GM12878 (cell line): ENCODE measurements at regions of chr1 and their contacts with region 1.

Region 1: DNA sequence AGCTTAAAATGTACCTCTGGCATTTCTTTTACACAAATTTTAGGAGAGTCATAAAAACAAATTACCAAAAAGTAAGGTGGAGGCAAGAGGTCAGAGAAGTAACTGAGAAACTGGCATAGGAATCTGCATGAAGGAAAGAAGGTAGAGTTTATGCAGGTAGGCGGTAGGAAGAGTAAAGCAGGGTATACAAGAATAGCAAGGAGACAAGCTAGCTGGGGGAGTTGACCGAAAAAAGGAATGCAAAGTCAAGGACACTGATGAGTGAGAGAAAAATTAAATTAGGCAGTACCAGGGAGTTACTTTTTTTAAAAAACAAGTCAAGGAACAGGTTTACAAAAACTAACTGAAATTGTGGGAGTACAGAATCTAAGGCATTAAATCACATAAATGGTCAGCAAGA is 56.0 kb downstream of the FOXJ3 start:
- DNase-seq: no peak
- ATAC-seq: no peak
- H3K4me3 ChIP-seq: no peak overlapping the region
- H3K27ac ChIP-seq: no peak overlapping the region
- H3K4me1 ChIP-seq: no peaks in the 10 kb centered on the region
- H3K27me3 ChIP-seq: no peaks in the 10 kb centered on the region
- CTCF ChIP-seq: no peak
- EP300 ChIP-seq: no peak
- POLR2A ChIP-seq: no peak
- RAD21 ChIP-seq: no peak

Region 2: DNA sequence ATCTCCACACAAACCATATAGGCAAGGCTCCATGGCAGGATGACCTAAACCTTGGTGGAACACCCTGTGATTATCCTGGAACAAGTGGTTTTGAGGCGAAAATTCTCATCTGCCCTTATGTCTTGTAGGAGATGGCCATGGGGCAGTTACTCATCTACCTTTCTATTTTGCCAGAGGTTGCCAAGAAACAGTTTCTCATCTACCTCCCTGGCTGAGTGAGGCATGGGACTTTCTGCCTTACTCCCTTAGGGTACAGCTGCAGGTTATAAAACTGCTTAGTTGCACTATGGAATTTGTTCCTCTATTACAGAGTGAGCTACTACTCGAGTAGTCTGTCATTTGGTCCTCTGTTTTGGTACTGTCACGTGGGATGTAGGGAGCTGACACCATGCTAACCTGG is 83.2 kb before region 1 on chr1:
- CTCF ChIA-PET with region 1: no interaction called
- POLR2A ChIA-PET with region 1: no interaction called
- RAD21 ChIA-PET with region 1: no interaction called
- SMC1A ChIA-PET with region 1: no interaction called
- in situ Hi-C with region 1: no loop called
- intact Hi-C with region 1: no loop called
- DNase-seq: no peak
- ATAC-seq: no peak
- H3K4me3 ChIP-seq: no peak overlapping the region
- H3K27ac ChIP-seq: no peak overlapping the region
- H3K4me1 ChIP-seq: no peaks in the 10 kb centered on the region
- H3K27me3 ChIP-seq: no peaks in the 10 kb centered on the region
- CTCF ChIP-seq: no peak
- EP300 ChIP-seq: no peak
- POLR2A ChIP-seq: no peak
- RAD21 ChIP-seq: no peak

Region 3: DNA sequence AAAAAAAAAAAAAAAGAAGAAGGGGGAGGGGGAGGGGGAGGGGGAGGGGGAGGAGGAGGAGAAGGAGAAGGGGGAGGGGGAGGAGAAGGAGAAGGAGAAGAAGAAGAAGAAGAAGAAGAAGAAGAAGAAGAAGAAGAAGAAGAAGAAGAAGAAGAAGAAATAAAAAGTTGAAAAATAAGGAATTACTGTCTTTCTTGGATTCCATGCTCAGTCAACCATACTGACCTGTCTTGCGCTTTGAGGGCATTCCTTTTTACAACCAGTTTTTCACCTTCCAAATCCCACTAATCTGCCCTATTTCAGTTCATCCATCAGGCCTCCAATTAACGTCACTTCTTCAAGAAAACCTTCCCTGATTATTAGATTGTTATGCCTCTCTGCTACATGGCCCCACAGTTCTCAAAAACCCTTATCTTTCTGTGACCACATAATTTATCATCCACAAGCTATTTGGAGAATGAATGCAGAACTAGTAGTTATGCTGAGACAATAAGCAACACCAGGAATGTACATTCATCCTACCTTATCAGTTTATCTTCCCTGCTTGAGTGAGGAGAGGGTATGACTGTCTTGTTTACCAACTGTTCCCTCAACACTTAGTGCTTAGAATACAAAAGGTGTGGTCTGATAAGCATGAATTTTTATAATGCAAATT is 57.0 kb before region 1 on chr1:
- CTCF ChIA-PET with region 1: no interaction called
- POLR2A ChIA-PET with region 1: no interaction called
- RAD21 ChIA-PET with region 1: no interaction called
- SMC1A ChIA-PET with region 1: no interaction called
- in situ Hi-C with region 1: no loop called
- intact Hi-C with region 1: no loop called
- DNase-seq: no peak
- ATAC-seq: no peak
- H3K4me3 ChIP-seq: no peak overlapping the region
- H3K27ac ChIP-seq: no peak overlapping the region
- H3K4me1 ChIP-seq: no peaks in the 10 kb centered on the region
- H3K27me3 ChIP-seq: no peaks in the 10 kb centered on the region
- CTCF ChIP-seq: no peak
- EP300 ChIP-seq: no peak
- POLR2A ChIP-seq: no peak
- RAD21 ChIP-seq: no peak

Region 4: DNA sequence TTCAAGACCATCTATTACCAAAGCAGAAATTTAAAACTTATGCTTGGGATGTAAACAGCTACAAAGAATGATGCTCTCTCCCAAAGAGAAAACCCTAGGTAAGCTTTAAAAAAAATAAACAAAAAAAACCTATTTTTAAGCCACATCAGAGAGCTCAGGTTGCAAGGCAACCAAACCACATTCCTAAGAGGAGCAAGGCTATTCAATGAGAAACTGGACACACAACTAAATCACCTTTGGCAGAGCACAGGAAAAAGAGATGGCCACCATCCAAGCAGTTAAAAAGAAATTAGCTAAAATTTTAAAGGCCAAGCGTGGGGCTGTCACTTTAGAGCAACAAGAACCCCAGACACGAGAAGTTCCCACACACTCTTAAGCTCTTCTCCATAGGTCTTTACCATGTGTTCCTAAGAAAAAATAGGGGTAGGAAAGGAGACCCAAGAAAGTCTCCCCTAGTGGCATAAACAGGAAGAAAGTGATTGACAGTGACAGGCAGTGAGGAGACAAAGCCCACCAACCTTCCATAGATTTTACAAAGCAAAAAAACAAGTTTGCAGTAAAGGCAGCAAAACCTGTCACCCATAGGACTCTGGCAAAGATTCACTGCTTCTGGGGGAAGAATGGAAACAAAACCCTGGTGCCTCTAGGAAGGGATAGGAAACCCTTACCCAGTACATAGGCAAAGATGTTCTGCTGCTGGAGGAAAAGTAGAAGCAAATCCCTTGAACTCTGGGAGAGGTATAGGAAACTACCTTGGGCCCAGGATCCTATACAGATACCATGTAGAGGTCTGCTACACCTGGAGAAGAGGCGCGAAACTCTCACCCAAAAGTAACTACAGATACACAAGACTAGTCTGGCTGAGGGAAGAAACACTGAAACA is 12.6 kb before region 1 on chr1:
- CTCF ChIA-PET with region 1: interaction called, 4 read pairs
- POLR2A ChIA-PET with region 1: interaction called, 5 read pairs
- RAD21 ChIA-PET with region 1: interaction called, 5 read pairs
- SMC1A ChIA-PET with region 1: interaction called, 10 read pairs
- in situ Hi-C with region 1: no loop called
- intact Hi-C with region 1: no loop called
- DNase-seq: no peak
- ATAC-seq: no peak
- H3K4me3 ChIP-seq: no peak overlapping the region
- H3K27ac ChIP-seq: no peak overlapping the region
- H3K4me1 ChIP-seq: peaks cover 7% of the 10 kb centered on the region
- H3K27me3 ChIP-seq: no peaks in the 10 kb centered on the region
- CTCF ChIP-seq: 0 out of 6 replicates have a peak, but pooled peaks of 1 of the 3 experiments have one; percentile 5
- EP300 ChIP-seq: no peak
- POLR2A ChIP-seq: no peak
- RAD21 ChIP-seq: no peak

Region 5: DNA sequence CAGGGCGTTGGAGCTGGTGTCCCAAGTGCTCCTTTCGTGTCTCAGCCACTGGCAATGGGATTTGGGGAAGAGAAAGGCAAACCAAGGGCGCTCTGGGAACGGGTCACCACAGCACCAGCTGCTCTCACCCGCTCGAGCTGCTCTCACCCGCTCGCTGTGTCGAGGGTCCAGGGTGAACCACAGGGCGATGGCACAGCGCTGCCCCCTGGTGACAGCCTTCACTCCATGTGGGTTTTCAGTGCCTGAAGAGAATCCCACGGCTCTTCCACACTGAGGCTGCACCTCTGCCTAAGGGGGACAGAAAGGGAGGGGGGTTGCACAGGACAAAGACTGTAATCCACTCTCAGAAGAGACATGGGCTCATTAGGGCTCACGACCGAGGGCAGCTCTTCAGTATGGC is 468.1 kb after region 1 on chr1:
- CTCF ChIA-PET with region 1: no interaction called
- POLR2A ChIA-PET with region 1: no interaction called
- RAD21 ChIA-PET with region 1: no interaction called
- SMC1A ChIA-PET with region 1: no interaction called
- in situ Hi-C with region 1: no loop called
- intact Hi-C with region 1: no loop called
- DNase-seq: no peak
- ATAC-seq: peak; percentile 74
- H3K4me3 ChIP-seq: no peak overlapping the region
- H3K27ac ChIP-seq: no peak overlapping the region
- H3K4me1 ChIP-seq: no peaks in the 10 kb centered on the region
- H3K27me3 ChIP-seq: no peaks in the 10 kb centered on the region
- CTCF ChIP-seq: peak; percentile 65 to 69 (median 67)
- EP300 ChIP-seq: no peak
- POLR2A ChIP-seq: no peak
- RAD21 ChIP-seq: peak; percentile 66

Region 6: GRCh38 chr1:42777852-42778251 is 498.8 kb after region 1 on chr1:
- CTCF ChIA-PET with region 1: no interaction called
- POLR2A ChIA-PET with region 1: no interaction called
- RAD21 ChIA-PET with region 1: no interaction called
- SMC1A ChIA-PET with region 1: no interaction called
- in situ Hi-C with region 1: no loop called
- intact Hi-C with region 1: no loop called
- DNase-seq: no peak
- ATAC-seq: peak; percentile 77
- H3K4me3 ChIP-seq: no peak overlapping the region
- H3K27ac ChIP-seq: no peak overlapping the region
- H3K4me1 ChIP-seq: peaks cover 5% of the 10 kb centered on the region; the same call in 1 of the 2 replicates
- H3K27me3 ChIP-seq: no peaks in the 10 kb centered on the region
- CTCF ChIP-seq: peak; percentile 69 to 76 (median 71)
- EP300 ChIP-seq: no peak
- POLR2A ChIP-seq: no peak
- RAD21 ChIP-seq: peak; percentile 85